Heart left ventricle (tissue), 16 donors: ENCODE measurements at regions of chr18 and their contacts with region 1.

Region 1: DNA sequence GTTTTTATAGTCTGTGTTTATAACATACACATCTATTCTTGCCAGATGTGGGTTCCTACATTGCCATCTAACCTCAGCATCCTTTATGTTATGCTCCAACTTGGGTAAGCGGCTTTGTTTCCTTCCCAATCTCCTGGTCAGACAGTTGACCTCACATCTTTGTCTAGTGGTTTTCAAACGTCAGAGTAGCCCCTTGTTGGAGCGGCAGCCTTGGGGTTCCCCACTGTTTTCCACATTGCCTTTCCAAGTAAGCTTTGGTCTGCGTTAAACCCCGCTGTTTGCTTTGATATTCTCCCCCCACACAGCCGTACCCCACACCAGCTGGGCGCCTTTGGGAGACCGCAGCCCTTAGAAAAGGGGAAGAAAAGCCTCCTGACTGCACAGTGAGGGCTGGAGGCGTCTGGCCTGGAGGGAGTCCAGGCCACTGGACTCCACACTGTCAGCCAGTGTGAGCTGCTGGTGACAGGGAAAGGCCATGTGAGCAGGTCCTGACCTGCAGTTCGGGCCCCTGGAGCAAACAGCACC is 83.3 kb downstream of the MALT1 start:
- DNase-seq: peak in 4 of 5 donors; percentile 44 to 75 (median 62)
- ATAC-seq: peak; percentile 68 to 90 (median 78)
- H3K4me3 ChIP-seq: no peak overlapping the region
- H3K27ac ChIP-seq: peak overlapping the region in 9 of 12 donors; percentile 15 to 78 (median 52)
- H3K4me1 ChIP-seq: peaks cover 0 to 20% (median 9%) of the 10 kb centered on the region in 12 donors
- H3K27me3 ChIP-seq: no peaks in the 10 kb centered on the region
- CTCF ChIP-seq: no peak
- POLR2A ChIP-seq: no peak

Region 2: DNA sequence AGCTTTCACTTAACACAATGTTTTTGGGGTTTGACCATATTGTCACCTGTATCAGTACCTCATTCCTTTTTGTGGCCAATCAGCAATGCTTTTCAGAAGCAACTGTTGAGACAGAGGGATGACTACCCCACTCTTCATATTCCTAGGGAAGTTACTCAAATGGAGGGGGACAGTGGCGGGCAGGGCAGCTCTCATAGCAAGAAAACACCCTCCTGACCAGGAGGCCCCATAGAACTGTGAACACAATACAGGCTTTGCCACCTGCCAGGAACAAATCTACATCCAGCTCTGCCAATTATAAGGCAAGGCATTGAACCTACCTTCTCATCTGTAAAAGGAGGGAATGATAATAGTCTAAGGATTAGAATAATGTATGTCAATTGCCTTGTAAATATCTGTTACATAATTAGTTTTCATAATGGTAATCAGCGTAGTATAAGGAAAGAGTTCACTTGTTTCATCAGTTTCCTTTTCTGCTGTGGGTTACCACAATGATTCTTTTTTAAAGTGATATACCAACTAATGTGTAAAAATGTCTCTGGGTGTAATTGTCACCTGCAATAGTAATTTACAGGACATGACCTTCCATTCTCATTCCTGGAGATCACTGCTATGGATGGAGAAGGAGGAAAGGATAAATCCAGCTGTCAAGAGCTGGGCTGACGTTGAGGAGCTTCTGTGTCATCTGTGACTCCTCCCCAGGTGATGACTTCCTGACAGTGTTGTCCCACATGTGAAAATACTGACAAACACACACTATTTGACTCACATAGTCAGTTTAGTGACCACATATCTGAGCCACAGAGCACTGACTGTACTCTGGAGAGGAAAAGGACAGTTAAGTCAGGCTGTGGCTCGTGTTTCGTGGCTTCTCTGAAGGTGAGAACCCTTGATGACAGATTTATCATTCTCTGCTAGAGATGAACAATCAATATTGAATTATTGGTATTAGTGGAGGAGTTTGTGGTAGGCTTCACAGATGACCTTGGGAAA is 139.2 kb before region 1 on chr18:
- intact Hi-C with region 1: loop called in 1 of 10 experiments (anchors 10 kb)
- DNase-seq: no peak
- ATAC-seq: peak in 1 of 4 donors; percentile 52
- H3K4me3 ChIP-seq: no peak overlapping the region
- H3K27ac ChIP-seq: peak overlapping the region in 8 of 12 donors; percentile 1 to 68 (median 29)
- H3K4me1 ChIP-seq: peaks cover 0 to 34% (median 5%) of the 10 kb centered on the region in 12 donors
- H3K27me3 ChIP-seq: no peaks in the 10 kb centered on the region
- CTCF ChIP-seq: no peak
- POLR2A ChIP-seq: no peak

Region 3: DNA sequence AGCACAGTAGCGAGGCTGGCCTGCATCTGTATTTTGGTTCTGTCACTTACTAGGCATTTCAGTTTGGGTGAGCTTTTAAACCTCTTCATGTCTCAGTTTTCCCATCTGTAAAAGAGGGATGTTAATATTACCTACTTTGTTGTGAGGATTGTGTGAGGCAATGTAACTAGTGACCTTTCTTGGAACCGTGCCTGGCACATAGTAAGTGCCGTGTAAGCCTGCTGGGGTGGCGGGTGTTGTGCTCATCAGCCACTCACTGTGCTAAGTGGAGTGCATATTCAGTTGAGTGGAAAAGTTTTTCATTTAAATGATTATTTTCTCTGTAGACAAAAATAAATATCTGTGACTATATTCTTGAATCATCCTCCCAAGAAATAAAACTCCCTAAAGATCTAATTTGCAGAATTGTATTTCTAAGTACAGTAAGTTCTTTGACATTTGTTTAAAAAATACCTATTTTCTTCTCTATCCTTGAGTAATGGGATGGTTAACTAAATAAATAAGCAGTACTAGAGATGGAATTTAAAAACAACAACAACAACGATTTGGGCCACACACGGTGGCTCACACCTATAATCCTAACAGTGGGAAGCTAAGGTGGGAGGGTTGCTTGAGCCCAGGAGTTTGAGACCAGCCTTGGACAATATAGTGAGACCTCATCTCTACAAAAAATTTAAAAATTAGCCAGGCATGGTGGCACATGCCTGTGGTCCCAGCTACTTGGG is 26.7 kb before region 1 on chr18:
- intact Hi-C with region 1: loop called in 1 of 10 experiments (anchors 2 kb)
- DNase-seq: peak in 2 of 5 donors; percentile 42 to 58
- ATAC-seq: peak in 3 of 4 donors; percentile 49 to 76 (median 63)
- H3K4me3 ChIP-seq: no peak overlapping the region
- H3K27ac ChIP-seq: no peak overlapping the region
- H3K4me1 ChIP-seq: peaks cover 0 to 7% (median 0%) of the 10 kb centered on the region in 12 donors
- H3K27me3 ChIP-seq: no peaks in the 10 kb centered on the region
- CTCF ChIP-seq: no peak
- POLR2A ChIP-seq: no peak